CD8-positive, alpha-beta T cell (primary cell): ENCODE measurements at regions of chr7 and their contacts with region 1.

Region 1: DNA sequence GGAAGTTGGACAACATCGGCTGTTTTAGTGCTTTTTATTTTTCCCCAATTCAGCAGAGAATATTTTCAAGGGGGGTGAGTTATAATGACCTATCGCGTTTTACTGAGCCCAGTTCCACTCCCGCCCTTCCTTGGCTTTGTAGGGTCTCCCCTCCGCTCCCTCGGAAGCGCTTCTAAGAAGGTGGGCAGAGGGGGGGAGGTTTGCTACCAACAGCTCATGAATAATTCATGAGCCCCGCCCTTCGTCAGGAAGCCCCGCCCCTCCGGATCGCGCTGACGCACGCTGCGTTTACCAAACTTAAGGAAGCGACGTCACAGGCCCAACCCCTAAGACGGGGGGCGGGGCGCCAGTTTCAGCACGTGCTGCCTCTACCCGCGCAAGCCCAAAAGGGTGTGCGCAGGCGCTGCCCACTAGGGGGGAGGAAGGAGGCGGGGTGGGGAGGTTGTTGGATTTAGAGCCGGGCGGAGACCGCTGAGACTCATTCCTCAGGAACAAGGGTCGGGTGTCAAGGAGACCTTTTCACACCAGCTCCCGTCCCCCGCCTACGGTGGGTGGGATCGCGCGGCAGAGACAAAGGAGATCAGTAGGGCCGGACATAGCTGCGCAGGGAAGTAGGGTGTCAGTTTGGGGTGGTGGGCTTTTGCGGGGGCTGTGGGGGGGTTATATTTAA is 529 bp upstream of the MEPCE start:
- DNase-seq: peak; percentile 100
- ATAC-seq: peak; percentile 64
- H3K4me3 ChIP-seq: peak overlapping the region; percentile 69 to 96
- H3K4me3 Mint-ChIP-seq: peak overlapping the region; percentile 100
- H3K27ac ChIP-seq: peak overlapping the region; percentile 99 to 100
- H3K27ac Mint-ChIP-seq: peak overlapping the region; percentile 100
- H3K4me1 ChIP-seq: peaks cover 34% of the 10 kb centered on the region
- H3K4me1 Mint-ChIP-seq: peaks cover 42% of the 10 kb centered on the region
- H3K27me3 ChIP-seq: no peaks in the 10 kb centered on the region
- H3K27me3 Mint-ChIP-seq: no peaks in the 10 kb centered on the region
- CTCF ChIP-seq: no peak

Region 2: DNA sequence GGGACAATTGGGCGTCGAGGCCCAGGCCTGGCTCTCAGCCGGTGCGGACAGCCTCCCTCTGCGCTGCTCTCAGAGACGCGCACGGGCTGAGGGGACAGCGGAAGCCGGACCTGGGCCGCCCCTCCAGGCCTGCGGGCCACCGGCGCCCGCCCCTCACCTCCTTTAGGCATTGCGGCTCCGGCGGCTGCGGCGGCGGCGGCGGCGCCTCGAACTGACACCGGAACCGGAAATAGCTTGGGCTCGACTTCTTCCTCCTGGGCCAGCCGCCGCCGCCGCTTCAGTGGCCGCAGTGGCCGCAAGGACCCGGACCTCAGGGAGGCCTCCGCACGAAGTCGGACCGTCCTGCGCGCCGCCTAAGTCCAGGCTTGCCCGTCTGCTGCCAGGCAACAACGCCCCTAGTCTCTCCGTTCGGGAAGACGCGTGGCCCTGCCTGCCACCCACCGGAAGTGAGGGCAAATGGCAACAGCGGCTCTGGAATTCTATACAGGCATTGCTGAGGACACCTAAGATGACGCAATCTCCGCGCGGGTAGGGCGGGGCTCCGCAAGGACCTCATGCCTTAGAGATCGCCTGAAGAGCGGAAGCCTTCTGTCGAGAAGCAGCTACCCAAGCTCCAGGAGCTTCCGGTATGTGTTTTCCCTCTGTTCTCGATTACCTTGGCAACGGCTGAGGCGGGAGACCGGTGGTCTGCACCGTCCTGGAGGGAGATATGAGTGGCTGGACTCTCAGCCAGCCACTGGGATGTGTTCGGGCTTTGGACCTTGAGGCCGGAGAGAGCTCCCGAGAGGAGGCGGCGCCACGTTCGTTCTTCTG is 1020.5 kb before region 1 on chr7 and contains the starts of genes BUD31 and PDAP1:
- CTCF ChIA-PET with region 1: no interaction called
- POLR2A ChIA-PET with region 1: interaction called, 6 read pairs
- intact Hi-C with region 1: loop called in 1 of 2 experiments (anchors 2 kb)
- DNase-seq: peak; percentile 91 to 99 (median 93)
- ATAC-seq: peak; percentile 91
- H3K4me3 ChIP-seq: peak within 1 kb of the TSS; percentile 66 to 84
- H3K4me3 Mint-ChIP-seq: peak within 1 kb of the TSS; percentile 94
- H3K27ac ChIP-seq: peak within 1 kb of the TSS; percentile 83 to 96
- H3K27ac Mint-ChIP-seq: peak within 1 kb of the TSS; percentile 99
- H3K4me1 ChIP-seq: peaks cover 35% of the 10 kb centered on the region
- H3K4me1 Mint-ChIP-seq: peaks cover 62% of the 10 kb centered on the region
- H3K27me3 ChIP-seq: no peaks in the 10 kb centered on the region
- H3K27me3 Mint-ChIP-seq: no peaks in the 10 kb centered on the region
- CTCF ChIP-seq: peak; percentile 19
- total RNA-seq, gene BUD31: 144 TPM
- total RNA-seq, gene PDAP1: 34.5 to 36.2 TPM

Region 3: GRCh38 chr7:100088621-100089457 is 340.3 kb before region 1 on chr7 and contains the start of gene COPS6:
- CTCF ChIA-PET with region 1: no interaction called
- POLR2A ChIA-PET with region 1: no interaction called
- intact Hi-C with region 1: loop called in 1 of 2 experiments (anchors 5 kb)
- DNase-seq: peak; percentile 72 to 93 (median 88)
- ATAC-seq: peak; percentile 89
- H3K4me3 ChIP-seq: peak within 1 kb of the TSS; percentile 89 to 95
- H3K4me3 Mint-ChIP-seq: peak within 1 kb of the TSS; percentile 88
- H3K27ac ChIP-seq: peak within 1 kb of the TSS; percentile 81
- H3K27ac Mint-ChIP-seq: peak within 1 kb of the TSS; percentile 95
- H3K4me1 ChIP-seq: peaks cover 18% of the 10 kb centered on the region
- H3K4me1 Mint-ChIP-seq: peaks cover 27% of the 10 kb centered on the region
- H3K27me3 ChIP-seq: no peaks in the 10 kb centered on the region
- H3K27me3 Mint-ChIP-seq: no peaks in the 10 kb centered on the region
- CTCF ChIP-seq: no peak
- total RNA-seq, gene COPS6: 73.2 to 77.8 TPM

Region 4: GRCh38 chr7:100221231-100221718 is 207.8 kb before region 1 on chr7:
- CTCF ChIA-PET with region 1: interaction called, 3 read pairs
- POLR2A ChIA-PET with region 1: interaction called, 6 read pairs
- intact Hi-C with region 1: loop called in 1 of 2 experiments (anchors 1 kb)
- DNase-seq: peak; percentile 75 to 95 (median 86)
- ATAC-seq: peak; percentile 67
- H3K4me3 ChIP-seq: peak overlapping the region; percentile 84 to 88
- H3K4me3 Mint-ChIP-seq: peak overlapping the region; percentile 94
- H3K27ac ChIP-seq: peak overlapping the region; percentile 93 to 98
- H3K27ac Mint-ChIP-seq: peak overlapping the region; percentile 99
- H3K4me1 ChIP-seq: peaks cover 52% of the 10 kb centered on the region
- H3K4me1 Mint-ChIP-seq: peaks cover 62% of the 10 kb centered on the region
- H3K27me3 ChIP-seq: no peaks in the 10 kb centered on the region
- H3K27me3 Mint-ChIP-seq: no peaks in the 10 kb centered on the region
- CTCF ChIP-seq: no peak

Region 5: DNA sequence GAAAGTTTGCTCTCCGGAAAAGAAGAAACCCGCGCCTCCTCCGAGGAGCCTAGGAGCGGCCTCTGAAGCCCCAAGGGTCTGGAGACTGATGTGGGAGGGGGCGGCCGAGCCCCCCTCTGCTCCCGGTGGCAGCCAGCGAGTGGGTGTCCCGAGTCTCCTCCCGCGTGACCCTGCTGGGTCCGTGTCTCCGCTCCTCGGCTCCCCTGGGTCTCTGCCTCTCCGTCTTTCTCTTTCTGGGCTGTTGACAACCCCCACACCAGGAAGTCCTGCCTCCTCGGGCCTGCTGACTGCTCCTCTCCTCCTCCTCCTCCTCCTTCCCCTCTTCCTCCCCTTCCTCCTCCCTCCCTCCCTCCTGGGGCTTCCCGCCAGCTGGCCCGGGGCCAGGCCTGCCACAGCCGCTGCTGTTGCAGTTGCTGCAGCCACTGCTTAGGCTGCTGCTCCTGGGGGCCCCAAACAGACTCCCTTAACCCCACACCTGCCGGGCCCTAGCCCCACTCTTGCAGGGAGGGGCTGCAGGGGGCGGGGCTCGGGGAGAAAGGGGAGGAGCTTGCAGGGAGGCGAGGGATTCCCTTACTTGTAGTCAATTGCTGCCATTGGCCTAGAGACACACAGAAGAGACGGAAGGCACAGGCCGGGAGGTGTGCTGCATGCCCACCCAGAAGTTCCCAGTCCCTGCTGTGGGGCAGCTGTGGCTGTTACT is 50.0 kb after region 1 on chr7 and contains the start of gene TSC22D4:
- CTCF ChIA-PET with region 1: interaction called, 3 read pairs
- POLR2A ChIA-PET with region 1: interaction called, 27 read pairs
- intact Hi-C with region 1: loop called (anchors 1 to 2 kb)
- DNase-seq: peak; percentile 85 to 97 (median 94)
- ATAC-seq: peak; percentile 69
- H3K4me3 ChIP-seq: peak within 1 kb of the TSS; percentile 82 to 96
- H3K4me3 Mint-ChIP-seq: peak within 1 kb of the TSS; percentile 93
- H3K27ac ChIP-seq: peak within 1 kb of the TSS; percentile 72 to 75
- H3K27ac Mint-ChIP-seq: peak within 1 kb of the TSS; percentile 89
- H3K4me1 ChIP-seq: peaks cover 54% of the 10 kb centered on the region
- H3K4me1 Mint-ChIP-seq: peaks cover 44% of the 10 kb centered on the region
- H3K27me3 ChIP-seq: no peaks in the 10 kb centered on the region
- H3K27me3 Mint-ChIP-seq: no peaks in the 10 kb centered on the region
- CTCF ChIP-seq: no peak
- total RNA-seq, gene TSC22D4: 30.7 to 32.3 TPM

Region 6: DNA sequence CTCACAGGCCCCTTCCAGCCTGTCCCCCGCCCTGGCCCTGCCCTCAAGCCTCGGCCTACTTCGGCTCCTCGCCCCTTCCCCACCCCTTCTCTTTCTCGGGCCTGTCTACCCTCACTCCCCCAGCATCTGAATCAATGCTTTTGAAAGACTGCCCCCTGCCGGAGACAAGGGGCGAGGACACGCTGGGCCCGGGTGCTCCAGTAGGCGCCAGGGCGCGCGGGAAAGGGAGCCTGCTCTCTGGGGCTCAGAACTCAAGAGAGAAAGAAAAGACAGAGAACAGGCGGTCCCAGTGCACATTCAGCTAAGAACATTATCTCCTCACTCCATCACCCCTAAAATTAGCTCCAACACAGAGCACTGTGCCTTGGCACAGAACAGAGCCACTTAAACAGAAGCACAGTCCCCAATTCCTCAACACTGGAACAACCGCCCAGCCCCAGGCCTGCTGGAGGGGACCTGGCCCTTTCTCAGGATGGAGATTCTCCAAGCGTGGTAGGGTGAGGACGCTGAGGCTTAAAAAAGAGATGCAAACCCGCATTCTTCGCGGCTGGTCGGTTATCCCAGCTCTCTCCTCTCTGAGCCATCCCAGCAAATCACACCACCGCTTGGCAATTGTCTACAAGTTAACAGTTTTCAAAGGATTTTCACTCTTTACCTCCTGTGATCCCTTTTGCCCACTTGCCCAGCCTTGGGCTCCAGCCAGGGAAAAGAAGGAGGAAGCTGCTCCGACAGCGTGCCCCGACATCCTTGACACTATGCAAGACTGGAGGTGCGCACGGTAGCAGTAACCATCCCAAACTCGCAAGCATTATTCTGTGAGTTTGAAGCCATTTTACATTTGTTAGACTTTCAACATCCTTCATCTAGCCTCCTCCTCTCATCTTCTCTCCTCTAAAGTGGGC is 262.8 kb after region 1 on chr7:
- CTCF ChIA-PET with region 1: no interaction called
- POLR2A ChIA-PET with region 1: interaction called, 9 read pairs
- intact Hi-C with region 1: loop called in 1 of 2 experiments (anchors 5 kb)
- DNase-seq: peak; percentile 63 to 88 (median 82)
- ATAC-seq: peak; percentile 71
- H3K4me3 ChIP-seq: peak overlapping the region in 1 of 2 experiments; percentile 72
- H3K4me3 Mint-ChIP-seq: peak overlapping the region; percentile 94
- H3K27ac ChIP-seq: no peak overlapping the region
- H3K27ac Mint-ChIP-seq: peak overlapping the region; percentile 90
- H3K4me1 ChIP-seq: peaks cover 53% of the 10 kb centered on the region
- H3K4me1 Mint-ChIP-seq: peaks cover 42% of the 10 kb centered on the region
- H3K27me3 ChIP-seq: no peaks in the 10 kb centered on the region
- H3K27me3 Mint-ChIP-seq: no peaks in the 10 kb centered on the region
- CTCF ChIP-seq: peak; percentile 83

Region 7: DNA sequence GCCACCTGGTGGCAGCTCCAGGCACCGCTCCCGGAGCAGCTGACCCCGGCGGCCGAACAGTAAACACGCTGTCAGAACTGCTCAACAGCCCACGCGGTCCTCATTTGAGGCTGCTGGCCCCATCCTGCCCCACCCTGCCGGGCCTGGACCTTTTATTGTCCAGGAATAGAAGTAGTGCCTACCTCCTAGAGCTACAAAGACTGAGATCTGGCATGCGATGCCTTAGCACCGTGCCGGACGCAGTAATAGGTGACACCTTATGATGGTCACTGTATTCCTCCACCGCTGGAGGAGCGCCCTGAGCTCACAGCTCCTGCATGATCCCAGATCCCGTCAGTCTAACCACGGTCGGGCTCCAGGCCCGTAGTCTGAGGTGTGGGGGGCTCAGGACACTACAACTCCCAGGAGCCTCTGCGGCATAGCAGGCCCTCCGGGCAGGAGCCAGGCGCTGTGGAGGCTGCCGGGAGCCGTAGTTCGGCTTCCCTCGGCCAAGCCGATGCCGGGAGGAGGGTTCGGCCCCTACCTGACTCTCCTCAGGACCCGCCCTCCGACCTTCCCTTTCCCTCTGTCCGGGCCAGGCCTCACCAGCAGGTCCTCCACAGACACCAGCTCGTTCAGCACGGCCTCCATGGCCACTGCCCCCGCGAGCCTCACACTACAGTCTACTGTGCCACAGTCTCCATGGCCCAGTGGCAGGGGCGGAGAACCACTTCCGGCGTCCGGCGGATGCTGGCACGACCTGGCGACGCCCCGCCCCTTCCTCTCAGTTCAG is 815.5 kb after region 1 on chr7 and contains the start of gene FIS1:
- CTCF ChIA-PET with region 1: no interaction called
- POLR2A ChIA-PET with region 1: no interaction called
- intact Hi-C with region 1: loop called in 1 of 2 experiments (anchors 10 kb)
- DNase-seq: peak; percentile 81 to 96 (median 92)
- ATAC-seq: peak; percentile 95
- H3K4me3 ChIP-seq: peak within 1 kb of the TSS; percentile 94 to 98
- H3K4me3 Mint-ChIP-seq: peak within 1 kb of the TSS; percentile 99
- H3K27ac ChIP-seq: peak within 1 kb of the TSS; percentile 92 to 93
- H3K27ac Mint-ChIP-seq: peak within 1 kb of the TSS; percentile 99
- H3K4me1 ChIP-seq: peaks cover 18% of the 10 kb centered on the region
- H3K4me1 Mint-ChIP-seq: peaks cover 46% of the 10 kb centered on the region
- H3K27me3 ChIP-seq: no peaks in the 10 kb centered on the region
- H3K27me3 Mint-ChIP-seq: no peaks in the 10 kb centered on the region
- CTCF ChIP-seq: peak; percentile 96
- total RNA-seq, gene FIS1: 66.1 to 72.6 TPM